Naive thymus-derived CD8-positive, alpha-beta T cell (primary cell): ENCODE measurements at regions of chr7 and their contacts with region 1.

Region 1: DNA sequence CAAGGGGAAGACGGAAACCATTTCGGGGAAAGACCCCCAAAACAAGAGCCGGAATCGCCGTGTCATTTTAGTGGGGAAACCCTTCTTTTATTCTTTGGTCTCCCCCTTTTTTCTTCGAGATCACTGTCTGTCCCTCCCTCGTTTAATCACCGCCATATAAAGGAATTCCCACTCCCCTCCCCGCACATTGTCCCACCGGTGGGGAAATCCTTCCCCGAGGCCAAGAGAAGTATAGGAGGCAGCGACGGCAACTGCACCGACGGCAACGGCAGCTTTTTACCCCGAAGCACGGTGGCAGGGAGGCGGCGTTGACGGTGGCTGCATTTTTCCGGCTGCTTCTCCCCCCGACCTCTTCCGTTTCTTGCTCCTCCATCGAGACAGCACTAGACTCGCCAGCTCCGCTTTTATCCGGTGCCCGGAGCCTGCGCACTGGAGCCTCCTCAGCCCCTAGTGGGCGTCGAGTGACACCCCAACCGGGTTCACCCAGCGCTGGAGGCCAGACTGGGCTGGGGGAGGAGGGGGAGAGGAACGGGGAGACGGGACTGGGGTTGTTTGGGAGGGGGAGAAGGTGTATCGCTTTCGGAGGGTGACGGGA is 687 bp upstream of the KMT2E start:
- DNase-seq: peak; percentile 85 to 99 (median 95)
- ATAC-seq: peak; percentile 59 to 61
- H3K4me3 Mint-ChIP-seq: peak overlapping the region; percentile 94 to 100 (median 98)
- H3K27ac Mint-ChIP-seq: peak overlapping the region; percentile 99 to 100 (median 100)
- H3K4me1 Mint-ChIP-seq: peaks cover 27 to 57% (median 41%) of the 10 kb centered on the region in 4 donors
- H3K27me3 Mint-ChIP-seq: peaks cover 0 to 12% (median 0%) of the 10 kb centered on the region in 5 donors

Region 2: GRCh38 chr7:104814631-104815400 is 198.5 kb before region 1 on chr7:
- POLR2A ChIA-PET with region 1: no interaction called
- DNase-seq: no peak
- ATAC-seq: no peak
- H3K4me3 Mint-ChIP-seq: no peak overlapping the region
- H3K27ac Mint-ChIP-seq: no peak overlapping the region
- H3K4me1 Mint-ChIP-seq: peaks cover 0 to 7% (median 3%) of the 10 kb centered on the region in 4 donors
- H3K27me3 Mint-ChIP-seq: peaks cover 2 to 17% (median 11%) of the 10 kb centered on the region in 5 donors

Region 3: GRCh38 chr7:104943502-104944343 is 69.6 kb before region 1 on chr7:
- POLR2A ChIA-PET with region 1: interaction called, 93 read pairs
- DNase-seq: peak; percentile 36 to 91 (median 74)
- ATAC-seq: peak; percentile 41 to 59
- H3K4me3 Mint-ChIP-seq: peak overlapping the region; percentile 74 to 96 (median 88)
- H3K27ac Mint-ChIP-seq: peak overlapping the region; percentile 98 to 100 (median 100)
- H3K4me1 Mint-ChIP-seq: peaks cover 22 to 79% (median 62%) of the 10 kb centered on the region in 4 donors
- H3K27me3 Mint-ChIP-seq: peaks cover 0 to 4% (median 0%) of the 10 kb centered on the region in 5 donors

Region 4: GRCh38 chr7:104967088-104967487 is 46.2 kb before region 1 on chr7:
- POLR2A ChIA-PET with region 1: no interaction called
- DNase-seq: no peak
- ATAC-seq: no peak
- H3K4me3 Mint-ChIP-seq: no peak overlapping the region
- H3K27ac Mint-ChIP-seq: no peak overlapping the region
- H3K4me1 Mint-ChIP-seq: peaks cover 0 to 16% (median under 1%) of the 10 kb centered on the region in 4 donors
- H3K27me3 Mint-ChIP-seq: no peaks in the 10 kb centered on the region

Region 5: GRCh38 chr7:104993217-104993862 is 20.0 kb before region 1 on chr7:
- POLR2A ChIA-PET with region 1: interaction called, 500 read pairs
- DNase-seq: no peak
- ATAC-seq: no peak
- H3K4me3 Mint-ChIP-seq: peak overlapping the region in 1 of 10 donors; percentile 6
- H3K27ac Mint-ChIP-seq: peak overlapping the region; percentile 33 to 87 (median 70)
- H3K4me1 Mint-ChIP-seq: peaks cover 19 to 69% (median 49%) of the 10 kb centered on the region in 4 donors
- H3K27me3 Mint-ChIP-seq: no peaks in the 10 kb centered on the region

Region 6: DNA sequence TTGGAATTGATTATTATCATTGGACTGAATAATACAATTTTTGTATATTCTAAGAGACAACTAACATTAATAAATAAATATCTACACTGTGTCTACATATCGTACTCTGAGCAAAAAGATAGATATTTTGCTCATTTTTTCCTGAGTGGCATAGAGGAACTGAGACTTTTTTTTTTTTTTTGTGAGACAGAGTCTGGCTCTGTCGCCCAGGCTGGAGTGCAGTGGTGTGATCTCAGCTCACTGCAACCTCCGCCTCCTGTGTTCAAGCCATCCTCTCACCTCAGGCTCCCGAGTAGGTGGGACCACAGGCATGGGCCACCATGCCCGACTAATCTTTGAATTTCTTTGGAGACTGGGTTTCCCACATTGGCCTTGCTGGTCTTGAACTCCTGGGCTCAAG is 14.7 kb after region 1 on chr7:
- POLR2A ChIA-PET with region 1: interaction called, 19 read pairs
- DNase-seq: no peak
- ATAC-seq: peak in 1 of 2 donors; percentile 16
- H3K4me3 Mint-ChIP-seq: peak overlapping the region in 7 of 10 donors; percentile 21 to 70 (median 51)
- H3K27ac Mint-ChIP-seq: peak overlapping the region in 4 of 10 donors; percentile 47 to 74 (median 59)
- H3K4me1 Mint-ChIP-seq: peaks cover 30 to 88% (median 76%) of the 10 kb centered on the region in 4 donors
- H3K27me3 Mint-ChIP-seq: no peaks in the 10 kb centered on the region

Region 7: GRCh38 chr7:105531792-105532671 is 518.7 kb after region 1 on chr7 and contains the start of gene RINT1:
- POLR2A ChIA-PET with region 1: interaction called, 15 read pairs
- DNase-seq: peak; percentile 71 to 91 (median 86)
- ATAC-seq: peak; percentile 89
- H3K4me3 Mint-ChIP-seq: peak within 1 kb of the TSS; percentile 84 to 96 (median 92)
- H3K27ac Mint-ChIP-seq: peak within 1 kb of the TSS; percentile 86 to 98 (median 97)
- H3K4me1 Mint-ChIP-seq: peaks cover 13 to 42% (median 39%) of the 10 kb centered on the region in 4 donors
- H3K27me3 Mint-ChIP-seq: no peaks in the 10 kb centered on the region
- polyA plus RNA-seq, gene RINT1: 15.0 to 17.5 (median 15.4) TPM